CD14-positive monocyte (primary cell): ENCODE measurements at regions of chr9 and their contacts with region 1.

Region 1: GRCh38 chr9:105064315-105065097 is 136.6 kb upstream of the ABCA1 start:
- DNase-seq: peak; percentile 90 to 93 (median 91)
- H3K4me3 ChIP-seq: peak overlapping the region in 1 of 3 experiments; percentile 44
- H3K4me3 Mint-ChIP-seq: peak overlapping the region; percentile 64 to 85
- H3K27ac ChIP-seq: peak overlapping the region; percentile 97 to 99
- H3K27ac Mint-ChIP-seq: peak overlapping the region; percentile 96 to 99 (median 98)
- H3K4me1 ChIP-seq: peaks cover 56 to 57% of the 10 kb centered on the region in 2 donors
- H3K4me1 Mint-ChIP-seq: peaks cover 61% of the 10 kb centered on the region
- H3K27me3 ChIP-seq: no peaks in the 10 kb centered on the region
- H3K27me3 Mint-ChIP-seq: peaks cover 0 to 9% (median 1%) of the 10 kb centered on the region in 3 donors
- CTCF ChIP-seq: no peak

Region 2: GRCh38 chr9:104872656-104873485 is 191.6 kb before region 1 on chr9:
- intact Hi-C with region 1: loop called in 1 of 2 experiments (anchors 10 kb)
- DNase-seq: peak; percentile 95 to 99 (median 99)
- H3K4me3 ChIP-seq: no peak overlapping the region
- H3K4me3 Mint-ChIP-seq: peak overlapping the region in 1 of 2 donors; percentile 60
- H3K27ac ChIP-seq: peak overlapping the region; percentile 83 to 96
- H3K27ac Mint-ChIP-seq: peak overlapping the region; percentile 90 to 98 (median 96)
- H3K4me1 ChIP-seq: peaks cover 59% of the 10 kb centered on the region in 2 donors
- H3K4me1 Mint-ChIP-seq: peaks cover 65% of the 10 kb centered on the region
- H3K27me3 ChIP-seq: no peaks in the 10 kb centered on the region
- H3K27me3 Mint-ChIP-seq: peaks cover 0 to 2% (median 2%) of the 10 kb centered on the region in 3 donors
- CTCF ChIP-seq: no peak

Region 3: DNA sequence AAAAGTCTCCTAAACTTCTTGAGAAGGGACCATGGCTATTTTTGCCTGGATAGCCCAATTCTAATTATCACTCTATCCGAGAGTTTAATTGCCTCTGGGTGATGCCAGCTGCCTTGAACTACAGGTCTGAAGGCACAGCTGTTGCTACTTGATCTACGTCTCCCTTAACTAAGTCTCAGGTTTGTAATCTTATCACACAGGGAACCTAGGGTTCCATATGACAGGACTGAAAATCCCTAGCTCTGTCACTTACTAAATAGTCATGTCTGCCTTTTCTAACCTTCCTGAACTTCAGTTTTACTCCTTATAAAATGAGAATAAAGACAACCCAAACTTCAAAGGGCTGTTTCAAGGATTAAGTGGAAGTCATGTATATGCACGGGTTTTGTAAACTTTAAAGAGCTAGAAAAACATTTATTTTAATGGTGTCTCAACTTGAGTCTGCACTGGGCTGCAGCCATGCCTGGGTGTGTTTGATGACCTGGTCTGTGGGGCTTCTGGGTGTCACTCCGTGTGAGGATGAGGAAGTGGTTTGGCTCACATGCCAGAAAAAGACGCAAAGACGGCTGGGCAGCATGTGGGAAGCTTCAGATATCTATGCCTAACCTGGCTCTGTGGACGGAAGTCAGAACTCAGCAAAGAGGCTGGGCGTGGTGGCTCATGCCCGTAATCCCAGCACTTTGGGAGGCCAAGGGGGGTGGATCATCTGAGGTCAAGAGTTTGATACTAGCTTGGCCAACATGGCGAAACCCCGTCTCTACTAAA is 50.6 kb after region 1 on chr9:
- intact Hi-C with region 1: loop called in 1 of 2 experiments (anchors 5 kb)
- DNase-seq: peak; percentile 95 to 96 (median 96)
- H3K4me3 ChIP-seq: peak overlapping the region in 1 of 3 experiments; percentile 13
- H3K4me3 Mint-ChIP-seq: peak overlapping the region; percentile 20 to 53
- H3K27ac ChIP-seq: peak overlapping the region; percentile 46 to 84
- H3K27ac Mint-ChIP-seq: peak overlapping the region; percentile 77 to 94 (median 91)
- H3K4me1 ChIP-seq: peaks cover 26 to 27% of the 10 kb centered on the region in 2 donors
- H3K4me1 Mint-ChIP-seq: peaks cover 30% of the 10 kb centered on the region
- H3K27me3 ChIP-seq: no peaks in the 10 kb centered on the region
- H3K27me3 Mint-ChIP-seq: peaks cover 0 to 3% (median 2%) of the 10 kb centered on the region in 3 donors
- CTCF ChIP-seq: no peak

Region 4: GRCh38 chr9:105148328-105149006 is 84.0 kb after region 1 on chr9:
- intact Hi-C with region 1: loop called (anchors 5 kb)
- DNase-seq: no peak
- H3K4me3 ChIP-seq: no peak overlapping the region
- H3K4me3 Mint-ChIP-seq: no peak overlapping the region
- H3K27ac ChIP-seq: no peak overlapping the region
- H3K27ac Mint-ChIP-seq: no peak overlapping the region
- H3K4me1 ChIP-seq: peaks cover 13 to 18% of the 10 kb centered on the region in 2 donors
- H3K4me1 Mint-ChIP-seq: peaks cover 19% of the 10 kb centered on the region
- H3K27me3 ChIP-seq: no peaks in the 10 kb centered on the region
- H3K27me3 Mint-ChIP-seq: peaks cover 0 to 3% (median 0%) of the 10 kb centered on the region in 3 donors
- CTCF ChIP-seq: no peak

Region 5: GRCh38 chr9:105822814-105823213 is 758.3 kb after region 1 on chr9:
- intact Hi-C with region 1: no loop called
- DNase-seq: no peak
- H3K4me3 ChIP-seq: no peak overlapping the region
- H3K4me3 Mint-ChIP-seq: no peak overlapping the region
- H3K27ac ChIP-seq: no peak overlapping the region
- H3K27ac Mint-ChIP-seq: no peak overlapping the region
- H3K4me1 ChIP-seq: no peaks in the 10 kb centered on the region
- H3K4me1 Mint-ChIP-seq: no peaks in the 10 kb centered on the region
- H3K27me3 ChIP-seq: no peaks in the 10 kb centered on the region
- H3K27me3 Mint-ChIP-seq: peaks cover 0 to 2% (median 0%) of the 10 kb centered on the region in 3 donors
- CTCF ChIP-seq: no peak